PC-9 (cell line): ENCODE measurements at regions of chr11 and their contacts with region 1.

Region 1: DNA sequence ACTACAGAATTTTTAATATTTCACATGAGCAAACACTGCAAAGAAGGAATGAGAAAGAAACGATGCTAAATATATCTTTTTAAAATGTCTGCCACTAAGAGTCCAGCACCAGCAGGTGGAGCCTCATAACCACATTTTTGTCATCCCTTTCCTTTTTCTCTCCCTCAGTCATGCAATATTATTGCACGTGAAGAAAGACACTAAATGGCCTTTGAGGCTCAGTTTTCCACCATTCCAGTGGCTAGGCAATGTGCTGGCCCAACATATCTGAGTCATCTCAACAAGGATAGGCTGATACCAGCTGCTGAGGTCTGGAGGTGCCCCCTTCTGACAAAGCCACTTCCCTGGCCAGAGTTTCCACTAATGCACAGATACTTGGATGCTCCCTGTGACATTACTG is 1.8 kb downstream of the ALKBH8 start:
- DNase-seq: peak; percentile 20 to 60
- H3K4me3 ChIP-seq: peak overlapping the region; percentile 83; the same call in 1 of the 2 replicates
- H3K27ac ChIP-seq: peak overlapping the region; percentile 87
- H3K4me1 ChIP-seq: peaks cover 47% of the 10 kb centered on the region
- H3K27me3 ChIP-seq: no peaks in the 10 kb centered on the region
- CTCF ChIP-seq: peak; percentile 85

Region 2: GRCh38 chr11:108654994-108655631 is 1091.4 kb after region 1 on chr11:
- CTCF ChIA-PET with region 1: no interaction called
- POLR2A ChIA-PET with region 1: no interaction called
- intact Hi-C with region 1: loop called (anchors 5 kb)
- DNase-seq: peak; percentile 47 to 60
- H3K4me3 ChIP-seq: no peak overlapping the region
- H3K27ac ChIP-seq: no peak overlapping the region
- H3K4me1 ChIP-seq: no peaks in the 10 kb centered on the region
- H3K27me3 ChIP-seq: no peaks in the 10 kb centered on the region
- CTCF ChIP-seq: peak; percentile 93